Endothelial cell of umbilical vein (primary cell): ENCODE measurements at regions of chr7 and their contacts with region 1.

Region 1: DNA sequence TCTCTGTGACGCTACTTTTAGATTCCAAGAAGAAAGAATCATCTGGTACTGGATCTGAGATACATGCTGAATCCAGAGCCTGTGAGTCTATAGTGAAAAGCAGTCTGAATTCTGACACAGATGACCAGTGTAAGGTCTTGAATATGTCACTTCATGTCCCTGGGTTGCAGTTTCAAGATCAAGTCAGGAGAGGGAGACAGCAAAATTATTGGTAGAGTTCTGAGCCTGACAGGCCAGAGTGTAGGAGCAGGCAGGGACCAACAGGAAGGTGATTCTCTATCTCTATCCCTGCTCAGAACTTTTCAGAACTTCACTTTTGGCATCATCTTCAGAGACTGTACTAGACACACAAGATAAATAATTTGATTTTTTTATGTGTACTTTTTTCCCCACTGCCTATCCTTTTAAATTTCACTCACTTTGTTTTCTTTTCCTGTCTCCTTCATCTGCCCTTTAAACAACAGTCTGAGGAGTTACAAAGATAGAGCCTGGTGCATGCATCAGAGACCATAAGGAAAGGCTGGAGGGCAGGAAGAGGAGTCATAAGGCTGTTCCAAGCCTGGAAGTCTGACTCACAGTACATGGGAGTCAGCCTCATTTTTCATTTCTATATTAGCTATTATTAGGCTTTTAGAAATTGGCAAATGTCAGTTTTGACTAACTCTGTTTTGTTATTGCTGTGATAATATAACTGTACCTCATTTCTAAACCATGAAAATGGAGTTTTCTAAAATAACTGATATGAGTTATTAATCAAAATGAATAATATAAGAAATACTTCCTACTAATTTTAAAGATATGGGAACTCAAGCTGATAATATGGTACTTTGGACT is 120.2 kb upstream of the TMEM229A start:
- DNase-seq: peak; percentile 87
- H3K4me3 ChIP-seq: no peak overlapping the region
- H3K27ac ChIP-seq: peak overlapping the region; percentile 63
- H3K4me1 ChIP-seq: peaks cover 21% of the 10 kb centered on the region
- H3K27me3 ChIP-seq: no peaks in the 10 kb centered on the region
- CTCF ChIP-seq: peak; percentile 22 to 31
- POLR2A ChIP-seq: no peak

Region 2: DNA sequence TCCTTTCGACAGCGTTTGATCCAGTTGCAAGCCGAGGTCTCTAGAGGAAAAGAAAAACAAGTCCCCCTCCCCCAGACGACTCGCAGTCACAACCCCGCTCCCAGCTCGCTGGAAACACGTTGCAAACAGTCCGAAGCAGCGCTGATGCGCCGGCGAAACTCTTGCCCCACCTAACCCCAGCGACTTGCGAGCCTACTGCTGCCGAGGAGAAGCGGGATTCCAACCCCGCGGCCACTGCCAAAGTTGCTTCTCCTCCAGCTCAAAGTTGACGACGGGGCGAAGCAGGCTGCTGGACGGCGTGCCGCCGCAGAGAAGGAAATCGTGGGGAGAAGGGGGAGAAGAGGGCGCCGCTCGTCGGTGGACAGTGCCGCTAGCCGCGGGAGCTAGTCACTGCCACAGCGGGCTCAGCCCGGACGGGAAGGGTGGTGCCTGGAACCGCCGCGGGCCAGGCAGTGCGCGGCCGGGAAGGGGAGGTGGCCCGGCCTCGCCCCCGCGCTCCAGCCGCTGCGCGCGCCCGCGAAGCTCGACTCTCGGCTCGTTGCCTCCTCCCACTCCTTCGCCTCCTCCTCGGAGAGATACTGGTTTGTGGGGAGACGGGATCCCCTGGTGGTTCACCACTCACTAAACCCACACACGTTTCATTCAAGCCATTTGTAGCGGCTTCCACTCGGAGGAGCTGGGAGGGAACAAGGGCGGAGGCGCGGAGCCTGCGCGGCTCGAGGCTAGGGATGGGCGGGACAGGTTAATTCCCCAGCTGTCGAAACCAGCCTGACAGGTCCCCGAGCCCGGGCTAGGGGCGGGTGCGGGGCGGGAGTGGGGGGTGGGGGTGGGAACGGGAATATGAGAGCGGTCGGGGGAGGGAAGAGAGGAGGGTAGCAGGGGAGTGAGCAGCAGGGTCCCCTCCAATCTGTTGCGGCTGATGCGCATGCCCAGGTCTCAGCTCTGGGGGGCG is 612.6 kb after region 1 on chr7 and contains the start of gene GPR37:
- CTCF ChIA-PET with region 1: interaction called, 10 read pairs
- POLR2A ChIA-PET with region 1: no interaction called
- dilution Hi-C with region 1: no loop called
- intact Hi-C with region 1: no loop called
- DNase-seq: peak; percentile 73
- H3K4me3 ChIP-seq: peak within 1 kb of the TSS; percentile 24 to 52 (median 48)
- H3K27ac ChIP-seq: no peak within 1 kb of the TSS
- H3K4me1 ChIP-seq: peaks cover 4% of the 10 kb centered on the region
- H3K27me3 ChIP-seq: peaks cover 2 to 7% of the 10 kb centered on the region in 2 experiments
- CTCF ChIP-seq: no peak
- POLR2A ChIP-seq: no peak
- total RNA-seq, gene GPR37: 2.1 and 2.2 TPM in 2 replicates

Region 3: DNA sequence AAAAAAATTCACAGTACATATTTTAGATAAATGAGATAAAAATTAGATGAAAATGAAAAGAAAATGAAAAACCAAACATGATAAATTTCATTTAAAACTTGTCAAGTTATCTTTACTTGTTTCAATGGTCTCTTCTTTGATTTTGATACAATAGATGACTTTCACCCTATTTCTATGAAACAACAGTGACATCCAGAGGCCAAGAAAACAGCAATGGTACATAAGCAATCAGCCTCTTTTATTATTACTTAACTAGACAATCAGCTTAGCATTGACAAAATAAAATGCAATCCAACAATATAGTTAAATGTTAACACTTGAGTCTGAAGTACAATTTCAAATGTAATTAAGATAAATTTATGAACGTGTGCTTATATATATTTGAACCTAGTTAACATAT is 687.4 kb after region 1 on chr7:
- CTCF ChIA-PET with region 1: interaction called, 3 read pairs
- POLR2A ChIA-PET with region 1: no interaction called
- dilution Hi-C with region 1: no loop called
- intact Hi-C with region 1: loop called (anchors 1 kb)
- DNase-seq: peak; percentile 74
- H3K4me3 ChIP-seq: no peak overlapping the region
- H3K27ac ChIP-seq: no peak overlapping the region
- H3K4me1 ChIP-seq: peaks cover 17% of the 10 kb centered on the region
- H3K27me3 ChIP-seq: no peaks in the 10 kb centered on the region
- CTCF ChIP-seq: peak in 1 of 2 donors; percentile 5
- POLR2A ChIP-seq: no peak

Region 4: GRCh38 chr7:124856299-124856888 is 703.3 kb after region 1 on chr7:
- CTCF ChIA-PET with region 1: interaction called, 11 read pairs
- POLR2A ChIA-PET with region 1: no interaction called
- dilution Hi-C with region 1: no loop called
- intact Hi-C with region 1: loop called (anchors 1 kb)
- DNase-seq: peak; percentile 61
- H3K4me3 ChIP-seq: no peak overlapping the region
- H3K27ac ChIP-seq: no peak overlapping the region
- H3K4me1 ChIP-seq: no peaks in the 10 kb centered on the region
- H3K27me3 ChIP-seq: no peaks in the 10 kb centered on the region
- CTCF ChIP-seq: peak; percentile 31 to 44
- POLR2A ChIP-seq: no peak